IMR-90 (cell line): ENCODE measurements at regions of chr11 and their contacts with region 1.

Region 1: DNA sequence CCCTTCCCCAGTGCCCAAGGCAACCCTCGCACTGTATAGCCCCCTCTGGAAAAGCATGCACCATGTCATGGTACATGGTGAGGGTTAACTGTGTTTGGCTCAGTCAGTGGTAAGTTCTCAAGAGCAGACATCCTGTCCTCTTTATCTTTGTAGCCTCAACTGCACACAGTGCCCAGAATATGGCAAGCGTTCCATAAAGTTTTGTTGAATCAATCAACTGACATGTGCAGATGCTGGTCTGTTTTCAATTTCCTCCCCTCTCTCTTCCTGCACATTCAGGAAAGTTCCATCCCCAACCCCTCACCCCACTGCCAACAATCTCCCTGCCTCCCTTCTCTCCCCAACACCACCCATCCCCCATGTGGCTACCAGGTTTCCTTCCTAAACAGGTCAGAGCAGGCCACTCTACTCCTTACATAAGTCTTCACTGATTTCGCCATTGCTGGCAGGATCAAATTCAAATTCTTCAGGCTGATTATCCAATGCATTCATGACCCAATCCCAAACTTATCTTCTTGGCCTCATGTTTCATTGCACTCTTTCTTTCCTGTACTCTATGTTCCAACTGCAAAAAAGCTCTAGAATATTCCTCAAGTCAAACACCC is 15.5 kb upstream of the TMPRSS5 start:
- DNase-seq: peak; percentile 7
- ATAC-seq: no peak
- H3K4me3 ChIP-seq: no peak overlapping the region
- H3K27ac ChIP-seq: no peak overlapping the region
- H3K4me1 ChIP-seq: no peaks in the 10 kb centered on the region
- H3K27me3 ChIP-seq: no peaks in the 10 kb centered on the region
- CTCF ChIP-seq: no peak
- POLR2A ChIP-seq: no peak
- RAD21 ChIP-seq: no peak

Region 2: DNA sequence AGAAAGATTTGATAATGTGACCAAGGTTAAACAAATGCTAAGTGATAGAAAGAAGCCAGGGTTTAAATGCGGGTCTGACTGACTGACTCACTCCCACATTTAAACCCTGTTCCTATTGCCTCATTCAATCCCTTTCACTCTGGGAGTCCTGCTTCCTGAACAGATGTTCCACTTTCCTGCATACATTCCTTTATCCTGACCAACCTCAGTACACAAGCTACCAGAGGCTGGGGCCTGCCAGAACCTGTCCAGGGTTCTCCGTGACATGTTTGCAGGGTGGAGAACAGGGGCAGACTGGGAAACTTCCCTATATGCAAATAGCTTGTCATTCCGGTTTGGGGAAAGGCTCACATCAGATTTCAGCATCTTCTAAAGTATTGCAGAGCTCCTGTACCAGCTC is 337.0 kb before region 1 on chr11:
- CTCF ChIA-PET with region 1: no interaction called
- POLR2A ChIA-PET with region 1: no interaction called
- dilution Hi-C with region 1: no loop called
- in situ Hi-C with region 1: no loop called
- intact Hi-C with region 1: no loop called
- DNase-seq: peak; percentile 96
- ATAC-seq: peak; percentile 97
- H3K4me3 ChIP-seq: no peak overlapping the region
- H3K27ac ChIP-seq: no peak overlapping the region
- H3K4me1 ChIP-seq: no peaks in the 10 kb centered on the region
- H3K27me3 ChIP-seq: peaks cover 35% of the 10 kb centered on the region
- CTCF ChIP-seq: no peak
- POLR2A ChIP-seq: no peak
- RAD21 ChIP-seq: no peak

Region 3: DNA sequence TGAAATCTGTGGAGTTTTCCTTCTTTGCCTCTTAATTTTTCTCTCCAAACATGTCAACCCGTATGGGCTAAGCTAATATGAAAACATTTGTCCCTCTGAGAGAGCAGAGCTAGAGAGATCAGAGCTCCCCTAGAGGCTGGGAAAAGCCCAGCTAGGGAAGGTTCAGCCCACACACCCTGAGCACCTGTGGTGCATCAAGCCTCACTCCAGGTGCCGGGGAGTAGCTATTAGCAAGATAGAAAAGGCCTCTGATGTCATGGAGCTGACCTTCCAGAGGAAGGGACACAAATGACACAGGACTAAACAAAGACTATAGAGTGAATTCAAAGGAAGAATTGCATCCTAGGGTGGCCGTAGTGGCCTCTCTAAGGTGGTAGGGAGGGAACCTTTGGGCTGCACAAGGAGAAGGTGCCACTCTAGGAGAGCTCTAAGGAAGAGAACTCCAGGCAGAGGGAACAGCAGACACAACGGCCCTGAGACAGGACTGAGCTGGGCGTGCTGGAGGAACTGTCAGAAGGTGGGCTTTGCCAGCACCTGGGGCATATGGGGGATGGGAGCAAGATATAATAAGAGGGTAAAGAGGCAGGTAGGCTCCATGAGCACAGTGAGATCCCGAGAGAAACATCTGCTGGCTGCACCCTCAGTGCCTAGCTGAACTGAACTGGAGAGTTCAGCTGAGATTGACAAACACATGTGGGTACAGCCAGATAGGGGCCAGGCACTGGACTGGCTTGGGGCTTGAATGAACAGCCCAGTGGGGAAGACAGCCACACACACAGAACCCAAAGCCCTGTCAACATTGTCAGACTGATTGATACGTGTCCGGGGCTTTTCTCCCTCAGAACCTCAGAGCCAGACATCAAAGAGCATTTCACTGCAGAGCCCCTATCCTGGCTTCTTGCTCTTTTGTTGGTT is 180.9 kb before region 1 on chr11:
- CTCF ChIA-PET with region 1: no interaction called
- POLR2A ChIA-PET with region 1: no interaction called
- dilution Hi-C with region 1: no loop called
- in situ Hi-C with region 1: no loop called
- intact Hi-C with region 1: loop called (anchors 5 kb)
- DNase-seq: no peak
- ATAC-seq: no peak
- H3K4me3 ChIP-seq: no peak overlapping the region
- H3K27ac ChIP-seq: no peak overlapping the region
- H3K4me1 ChIP-seq: no peaks in the 10 kb centered on the region
- H3K27me3 ChIP-seq: peaks cover 22% of the 10 kb centered on the region
- CTCF ChIP-seq: no peak
- POLR2A ChIP-seq: no peak
- RAD21 ChIP-seq: no peak

Region 4: GRCh38 chr11:113781679-113782078 is 60.1 kb after region 1 on chr11:
- CTCF ChIA-PET with region 1: no interaction called
- POLR2A ChIA-PET with region 1: no interaction called
- dilution Hi-C with region 1: no loop called
- in situ Hi-C with region 1: no loop called
- intact Hi-C with region 1: no loop called
- DNase-seq: no peak
- ATAC-seq: no peak
- H3K4me3 ChIP-seq: no peak overlapping the region
- H3K27ac ChIP-seq: no peak overlapping the region
- H3K4me1 ChIP-seq: no peaks in the 10 kb centered on the region; the same call in 1 of the 2 replicates
- H3K27me3 ChIP-seq: peaks cover 6% of the 10 kb centered on the region; the same call in 1 of the 2 replicates
- CTCF ChIP-seq: no peak
- POLR2A ChIP-seq: no peak
- RAD21 ChIP-seq: no peak

Region 5: DNA sequence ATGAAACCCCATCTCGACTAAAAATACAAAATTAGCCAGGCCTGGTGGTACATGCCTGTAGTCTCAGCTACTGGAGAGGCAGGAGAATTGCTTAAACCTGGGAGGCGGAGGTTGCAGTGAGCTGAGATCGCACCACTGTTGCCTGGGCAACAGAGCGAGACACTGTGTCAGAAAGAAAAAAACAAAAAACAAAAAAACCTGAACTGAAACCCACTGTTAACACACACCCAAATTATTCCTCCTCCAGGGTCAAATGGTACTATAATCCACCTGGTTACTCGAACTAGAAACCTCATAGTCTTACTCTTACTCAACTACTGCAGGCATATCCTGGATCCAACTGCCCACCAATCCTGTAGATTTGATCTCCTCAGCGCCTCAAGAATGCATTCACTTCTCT is 118.3 kb after region 1 on chr11:
- CTCF ChIA-PET with region 1: no interaction called
- POLR2A ChIA-PET with region 1: no interaction called
- dilution Hi-C with region 1: no loop called
- in situ Hi-C with region 1: no loop called
- intact Hi-C with region 1: no loop called
- DNase-seq: no peak
- ATAC-seq: no peak
- H3K4me3 ChIP-seq: no peak overlapping the region
- H3K27ac ChIP-seq: no peak overlapping the region
- H3K4me1 ChIP-seq: no peaks in the 10 kb centered on the region
- H3K27me3 ChIP-seq: no peaks in the 10 kb centered on the region
- CTCF ChIP-seq: no peak
- POLR2A ChIP-seq: no peak
- RAD21 ChIP-seq: no peak